K562 (cell line): ENCODE measurements at regions of chr10 and their contacts with region 1.

Region 1: GRCh38 chr10:68950598-68950997 is 5.4 kb upstream of the DDX21 start:
- DNase-seq: no peak
- ATAC-seq: no peak
- H3K4me3 ChIP-seq: no peak overlapping the region
- H3K27ac ChIP-seq: no peak overlapping the region
- H3K4me1 ChIP-seq: peaks cover 6 to 7% of the 10 kb centered on the region in 2 experiments; a peak in 3 of 5 replicates
- H3K27me3 ChIP-seq: no peaks in the 10 kb centered on the region
- CTCF ChIP-seq: no peak
- EP300 ChIP-seq: no peak
- POLR2A ChIP-seq: 0 out of 2 replicates have a peak, but pooled peaks have one; percentile 22
- RAD21 ChIP-seq: no peak

Region 2: GRCh38 chr10:68816796-68817443 is 133.7 kb before region 1 on chr10:
- CTCF ChIA-PET with region 1: no interaction called
- POLR2A ChIA-PET with region 1: no interaction called
- in situ Hi-C with region 1: no loop called
- intact Hi-C with region 1: no loop called
- DNase-seq: peak in 1 of 4 experiments; percentile 1
- ATAC-seq: no peak
- H3K4me3 ChIP-seq: no peak overlapping the region
- H3K27ac ChIP-seq: no peak overlapping the region
- H3K4me1 ChIP-seq: peaks cover 0 to 3% of the 10 kb centered on the region in 2 experiments; a peak in 1 of 5 replicates
- H3K27me3 ChIP-seq: no peaks in the 10 kb centered on the region
- CTCF ChIP-seq: no peak
- EP300 ChIP-seq: no peak
- POLR2A ChIP-seq: no peak
- RAD21 ChIP-seq: no peak

Region 3: GRCh38 chr10:68938119-68938518 is 12.5 kb before region 1 on chr10:
- CTCF ChIA-PET with region 1: no interaction called
- POLR2A ChIA-PET with region 1: interaction called, 47 read pairs
- in situ Hi-C with region 1: no loop called
- intact Hi-C with region 1: no loop called
- DNase-seq: peak in 2 of 4 experiments; percentile 23 to 28
- ATAC-seq: peak; percentile 66
- H3K4me3 ChIP-seq: no peak overlapping the region
- H3K27ac ChIP-seq: no peak overlapping the region
- H3K4me1 ChIP-seq: no peaks in the 10 kb centered on the region
- H3K27me3 ChIP-seq: no peaks in the 10 kb centered on the region
- CTCF ChIP-seq: no peak
- EP300 ChIP-seq: no peak
- POLR2A ChIP-seq: no peak
- RAD21 ChIP-seq: no peak